Activated T-helper 1 cell treated with anti-CD3 and anti-CD28 coated beads, Interleukin-12 subunit alpha, Interleukin-12 subunit beta, Interleukin-2, Interleukin-4 antibody, amounts not matched to agents 30 ng/mL and 10 ng/mL and 1 ng/mL, durations not matched to agents 14 hours and 24 hours and 36 hours (primary cell): ENCODE measurements at regions of chr7 and their contacts with region 1.

Region 1: DNA sequence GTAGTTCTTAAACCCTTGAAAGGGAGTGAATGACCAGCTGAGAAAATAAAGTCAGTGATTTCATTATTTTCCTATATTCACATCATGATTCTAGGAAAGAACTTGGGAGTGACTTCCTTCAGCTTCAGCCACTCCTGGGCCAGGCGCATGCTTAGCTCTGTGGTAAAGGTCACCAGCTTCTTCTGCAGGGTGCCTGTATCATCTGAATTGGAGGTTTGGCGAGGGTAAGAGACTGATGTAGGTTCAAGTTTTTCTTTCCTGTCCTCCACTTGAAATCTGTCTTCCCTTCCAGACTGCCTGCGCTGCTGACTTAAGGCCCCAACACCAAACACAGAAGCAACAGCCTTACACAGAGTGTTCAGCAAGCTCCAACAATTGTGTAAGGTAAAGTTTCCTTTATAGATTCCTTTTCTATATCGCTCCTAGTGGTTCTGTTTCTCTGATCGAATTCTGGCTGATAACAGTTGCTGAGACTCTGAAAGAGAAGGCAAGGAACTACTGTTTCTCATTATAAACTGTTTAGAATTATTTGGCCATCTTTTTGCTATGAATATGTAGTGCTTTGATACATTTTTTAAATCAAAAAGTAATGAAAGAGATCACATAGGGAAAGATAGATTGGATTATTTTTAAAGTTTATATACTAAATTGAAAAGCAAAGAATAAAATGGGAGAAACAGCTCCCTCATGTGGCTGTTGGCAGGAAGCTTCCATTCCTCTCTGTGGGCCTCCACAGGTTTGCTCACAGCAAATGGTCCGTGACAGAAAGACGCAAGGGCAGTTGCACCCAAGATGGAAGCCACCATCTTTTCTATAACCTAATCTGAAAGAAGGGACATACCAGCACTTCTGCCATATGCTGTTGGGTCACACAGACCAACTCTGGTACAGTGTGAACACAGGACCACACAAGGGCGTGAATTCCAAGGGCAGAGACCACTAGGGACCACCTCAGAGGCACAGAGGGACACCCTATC is 14.0 kb downstream of the GATAD1 start:
- DNase-seq: peak; percentile 6
- H3K4me3 Mint-ChIP-seq: no peak overlapping the region
- H3K27ac Mint-ChIP-seq: no peak overlapping the region
- H3K4me1 Mint-ChIP-seq: no peaks in the 10 kb centered on the region
- H3K27me3 Mint-ChIP-seq: no peaks in the 10 kb centered on the region

Region 2: GRCh38 chr7:91276909-91277308 is 1184.4 kb before region 1 on chr7:
- intact Hi-C with region 1: no loop called
- DNase-seq: no peak
- H3K4me3 Mint-ChIP-seq: no peak overlapping the region
- H3K27ac Mint-ChIP-seq: no peak overlapping the region
- H3K4me1 Mint-ChIP-seq: no peaks in the 10 kb centered on the region
- H3K27me3 Mint-ChIP-seq: peaks cover 7% of the 10 kb centered on the region

Region 3: DNA sequence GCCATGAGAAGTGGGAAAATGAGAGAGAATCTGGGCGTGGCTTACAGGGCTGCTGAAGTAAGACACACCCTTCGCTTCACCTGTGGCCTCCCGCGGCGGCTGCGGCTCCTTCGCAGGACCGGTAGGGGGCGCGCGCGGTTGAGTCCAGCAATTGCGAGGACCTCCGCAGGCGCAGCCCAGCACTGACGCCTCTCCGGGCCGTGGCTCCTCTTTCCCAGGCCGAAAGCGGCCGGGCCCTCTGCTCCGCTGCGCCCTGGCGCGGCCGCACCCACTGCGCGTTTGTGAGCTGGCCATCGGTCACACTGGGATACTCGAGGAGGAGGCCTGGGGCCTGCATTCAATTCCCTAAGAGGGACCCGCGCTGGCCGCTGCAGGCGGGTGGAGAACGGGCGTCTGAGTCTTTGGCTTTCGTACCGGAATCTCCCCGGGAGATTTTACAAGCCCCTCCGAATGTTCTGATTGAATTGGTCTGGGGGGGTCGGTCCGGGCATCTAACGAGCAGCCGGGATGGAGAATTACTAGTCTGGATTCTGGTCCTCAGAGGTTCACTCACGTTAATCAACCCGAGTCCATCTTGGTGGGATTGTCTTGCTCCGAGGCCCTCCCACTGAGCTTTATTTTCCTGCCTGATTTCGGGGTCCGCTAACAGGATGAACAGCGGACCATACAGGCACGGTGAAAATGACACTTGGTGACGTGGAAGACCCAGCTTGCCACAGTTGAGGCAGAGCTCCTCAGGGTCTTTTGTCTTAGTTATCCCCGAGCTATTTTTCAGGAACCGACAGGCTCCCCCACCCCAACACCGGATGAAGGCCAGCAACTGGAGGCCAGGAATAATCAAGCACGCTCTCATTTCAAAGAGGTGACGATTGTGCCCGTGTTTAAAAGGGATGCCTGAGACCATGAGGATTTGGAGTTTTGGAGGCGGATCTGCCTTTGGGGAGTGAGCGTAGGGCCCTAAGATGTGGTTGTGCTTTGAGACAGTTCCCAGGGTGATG is 282.1 kb before region 1 on chr7 and contains the start of gene LRRD1:
- intact Hi-C with region 1: loop called (anchors 1 kb)
- DNase-seq: peak; percentile 84
- H3K4me3 Mint-ChIP-seq: peak within 1 kb of the TSS; percentile 69
- H3K27ac Mint-ChIP-seq: no peak within 1 kb of the TSS
- H3K4me1 Mint-ChIP-seq: no peaks in the 10 kb centered on the region
- H3K27me3 Mint-ChIP-seq: peaks cover 15% of the 10 kb centered on the region
- total RNA-seq, gene LRRD1: not detected in 2 replicates

Region 4: DNA sequence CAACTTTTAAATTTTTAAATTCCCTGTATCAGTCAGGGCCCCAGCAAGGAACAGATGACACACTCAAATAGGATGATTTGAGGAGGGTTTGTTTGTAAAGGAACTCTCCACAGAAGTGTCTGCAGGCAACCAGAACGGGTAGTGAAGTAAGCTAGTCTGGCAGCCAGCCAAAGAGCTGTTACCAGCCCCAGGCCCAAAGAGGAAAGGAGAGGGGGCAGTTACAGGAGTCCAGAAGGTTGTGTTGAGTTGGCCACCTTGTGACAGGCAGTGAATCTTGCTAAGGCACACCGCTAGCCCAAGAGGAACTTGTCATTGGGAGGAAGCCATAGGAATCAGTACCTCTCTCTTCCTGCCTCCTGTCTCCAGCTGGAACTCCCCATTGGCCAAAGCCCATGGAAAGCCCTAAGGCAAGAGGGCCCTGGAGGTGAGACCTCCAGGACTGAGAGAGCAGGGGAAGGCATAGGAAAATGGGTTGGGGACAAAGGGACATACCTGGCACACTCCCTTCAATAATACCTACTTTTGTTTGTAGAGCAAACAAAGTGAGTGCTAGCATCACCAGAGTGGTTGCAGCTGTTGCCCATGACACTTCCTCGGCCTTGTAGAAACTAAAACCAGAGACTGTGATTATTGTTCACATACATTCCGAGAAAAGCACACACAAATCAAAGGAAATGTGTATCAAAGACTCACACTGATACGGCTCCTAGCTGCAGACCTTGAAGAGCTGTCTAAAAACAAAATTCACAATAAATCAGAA is 39.5 kb before region 1 on chr7:
- intact Hi-C with region 1: loop called (anchors 5 kb)
- DNase-seq: no peak
- H3K4me3 Mint-ChIP-seq: no peak overlapping the region
- H3K27ac Mint-ChIP-seq: no peak overlapping the region
- H3K4me1 Mint-ChIP-seq: peaks cover 13% of the 10 kb centered on the region
- H3K27me3 Mint-ChIP-seq: peaks cover 3% of the 10 kb centered on the region

Region 5: DNA sequence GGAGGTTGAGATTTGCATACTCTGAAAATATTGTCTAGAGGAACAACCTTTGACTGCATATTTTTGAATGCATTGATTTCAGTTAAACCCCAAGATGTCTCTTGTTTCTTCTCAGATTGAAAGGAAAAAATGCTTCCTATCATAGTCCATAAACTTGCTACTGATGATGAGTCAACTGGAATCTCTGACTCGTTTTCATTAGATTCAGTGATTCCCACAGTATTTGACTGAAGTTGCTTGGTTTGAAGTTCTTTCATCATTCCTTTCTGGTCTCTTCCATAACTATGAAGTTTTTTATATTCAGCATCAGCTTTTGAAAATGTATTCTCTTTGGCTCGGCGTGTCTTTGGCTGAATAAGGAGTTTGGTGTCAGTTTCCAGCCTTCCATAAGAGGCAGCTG is 56.3 kb after region 1 on chr7:
- intact Hi-C with region 1: no loop called
- DNase-seq: no peak
- H3K4me3 Mint-ChIP-seq: no peak overlapping the region
- H3K27ac Mint-ChIP-seq: no peak overlapping the region
- H3K4me1 Mint-ChIP-seq: no peaks in the 10 kb centered on the region
- H3K27me3 Mint-ChIP-seq: no peaks in the 10 kb centered on the region